Mammary epithelial cell (primary cell): ENCODE measurements at regions of chr1 and their contacts with region 1.

Region 1: DNA sequence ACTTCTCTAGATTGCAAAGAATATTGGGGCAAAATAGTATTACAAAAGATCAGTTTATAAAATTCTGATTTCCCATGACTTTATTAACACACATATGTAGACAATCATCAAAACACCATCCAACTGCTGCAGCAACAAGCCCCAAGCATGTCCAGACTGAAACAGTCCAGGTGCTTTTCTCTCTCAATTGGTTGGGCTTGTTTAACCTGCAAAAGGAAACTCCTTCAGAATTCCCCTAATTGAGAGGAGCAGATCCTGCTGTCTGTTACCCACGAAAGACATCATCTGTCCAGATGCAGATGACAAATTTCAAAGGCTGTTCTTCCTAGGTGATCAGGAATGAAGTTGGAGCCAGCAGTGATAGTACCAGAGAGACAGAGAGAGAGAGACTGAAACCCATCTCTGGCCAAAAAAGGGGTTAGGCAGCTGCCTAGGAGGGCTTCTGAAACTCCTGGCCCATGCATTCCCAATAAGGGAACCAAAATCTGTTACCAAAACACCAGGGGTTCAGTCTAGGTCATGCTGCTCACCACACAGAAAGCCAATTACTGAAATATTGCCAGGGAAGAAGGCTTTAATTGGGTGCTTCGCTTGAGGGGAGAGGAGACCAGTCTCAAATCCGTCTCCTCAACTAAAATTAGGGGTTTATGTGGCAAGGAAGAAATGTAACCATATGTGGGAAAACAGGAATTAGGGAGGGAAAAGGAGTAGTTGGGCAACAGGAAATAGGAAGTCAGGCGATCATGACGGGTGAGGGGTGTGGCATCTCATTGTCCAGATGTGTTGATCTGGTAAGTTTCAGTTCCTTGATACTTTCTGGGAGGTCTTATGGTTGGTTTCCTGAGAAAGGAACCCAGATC is 34.7 kb upstream of the RGL1 start:
- DNase-seq: peak; percentile 57
- H3K4me3 ChIP-seq: no peak overlapping the region
- H3K27ac ChIP-seq: no peak overlapping the region
- H3K4me1 ChIP-seq: no peaks in the 10 kb centered on the region
- H3K27me3 ChIP-seq: no peaks in the 10 kb centered on the region
- CTCF ChIP-seq: no peak

Region 2: GRCh38 chr1:183812686-183813569 is 42.7 kb after region 1 on chr1:
- CTCF ChIA-PET with region 1: no interaction called
- dilution Hi-C with region 1: loop called (anchors 5 kb)
- in situ Hi-C with region 1: no loop called
- intact Hi-C with region 1: no loop called
- DNase-seq: peak; percentile 35
- H3K4me3 ChIP-seq: no peak overlapping the region
- H3K27ac ChIP-seq: no peak overlapping the region
- H3K4me1 ChIP-seq: peaks cover 4% of the 10 kb centered on the region
- H3K27me3 ChIP-seq: no peaks in the 10 kb centered on the region
- CTCF ChIP-seq: no peak